Activated CD4-positive, alpha-beta T cell treated with anti-CD3 and anti-CD28 coated beads for 36 hours (primary cell): ENCODE measurements at regions of chr11 and their contacts with region 1.

Region 1: DNA sequence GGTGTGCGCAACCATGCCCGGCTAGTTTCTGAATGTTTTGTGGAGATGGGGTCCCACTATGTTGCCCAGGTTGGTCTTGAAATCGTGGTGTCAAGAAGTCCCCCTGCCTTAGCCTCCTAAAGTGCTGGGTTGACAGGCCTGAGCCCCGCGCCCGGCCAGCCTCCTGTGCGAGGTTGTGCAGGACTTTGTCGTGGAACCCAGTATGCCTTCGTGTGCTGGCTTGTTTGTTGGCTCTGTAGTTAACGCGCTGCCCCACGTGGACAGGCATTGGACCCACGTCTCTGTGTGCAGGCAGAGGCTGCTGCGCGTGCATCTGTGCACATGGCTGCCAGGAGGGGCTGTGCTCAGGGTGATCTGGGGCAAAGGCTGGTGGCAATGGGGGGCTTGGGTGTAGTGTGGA is 33.9 kb upstream of the ZNF195 start:
- DNase-seq: no peak
- ATAC-seq: no peak
- H3K4me3 Mint-ChIP-seq: no peak overlapping the region
- H3K27ac Mint-ChIP-seq: no peak overlapping the region
- H3K4me1 Mint-ChIP-seq: peaks cover 5% of the 10 kb centered on the region
- H3K27me3 Mint-ChIP-seq: no peaks in the 10 kb centered on the region

Region 2: DNA sequence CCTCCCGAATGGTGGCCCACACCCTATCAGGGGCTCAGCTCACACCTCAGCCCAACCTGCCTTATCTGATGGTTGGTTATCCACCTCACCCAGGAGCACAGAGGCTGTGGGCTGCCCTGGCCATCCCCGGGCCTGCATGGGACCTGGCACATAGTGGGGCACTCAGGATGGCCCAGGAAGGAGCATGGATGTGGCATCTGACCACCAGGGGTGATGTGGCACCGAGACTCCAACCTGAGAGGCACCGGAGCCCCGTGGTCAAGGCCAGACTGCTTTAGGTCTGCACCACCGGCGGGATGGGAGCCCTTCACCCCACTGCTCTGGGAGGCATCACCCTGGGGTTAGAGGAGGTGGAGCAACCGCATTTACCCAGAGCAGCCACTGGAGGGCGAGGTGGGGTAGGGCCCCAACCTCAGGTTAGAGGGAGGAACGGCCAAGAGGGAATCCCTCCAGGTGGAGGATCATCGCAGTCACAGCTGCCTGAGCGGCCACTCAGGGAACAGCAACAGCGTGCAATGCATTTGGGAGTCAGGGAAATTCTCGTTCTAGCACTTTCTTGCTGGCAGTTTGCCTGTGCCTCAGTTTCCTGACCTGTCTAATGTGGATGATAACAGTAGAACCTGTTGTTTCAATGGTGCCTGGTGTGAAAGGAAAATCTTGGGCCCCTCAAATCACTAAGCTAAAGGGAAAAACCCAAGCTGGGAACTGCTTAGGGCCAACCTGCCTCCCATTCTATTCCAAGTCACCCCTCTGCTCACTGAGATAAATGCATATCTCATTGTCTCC is 302.7 kb before region 1 on chr11:
- CTCF ChIA-PET with region 1: interaction called, 7 read pairs
- POLR2A ChIA-PET with region 1: no interaction called
- intact Hi-C with region 1: loop called in 1 of 2 experiments (anchors 2 kb)
- DNase-seq: peak; percentile 74
- ATAC-seq: peak; percentile 92
- H3K4me3 Mint-ChIP-seq: no peak overlapping the region
- H3K27ac Mint-ChIP-seq: no peak overlapping the region
- H3K4me1 Mint-ChIP-seq: no peaks in the 10 kb centered on the region
- H3K27me3 Mint-ChIP-seq: no peaks in the 10 kb centered on the region

Region 3: DNA sequence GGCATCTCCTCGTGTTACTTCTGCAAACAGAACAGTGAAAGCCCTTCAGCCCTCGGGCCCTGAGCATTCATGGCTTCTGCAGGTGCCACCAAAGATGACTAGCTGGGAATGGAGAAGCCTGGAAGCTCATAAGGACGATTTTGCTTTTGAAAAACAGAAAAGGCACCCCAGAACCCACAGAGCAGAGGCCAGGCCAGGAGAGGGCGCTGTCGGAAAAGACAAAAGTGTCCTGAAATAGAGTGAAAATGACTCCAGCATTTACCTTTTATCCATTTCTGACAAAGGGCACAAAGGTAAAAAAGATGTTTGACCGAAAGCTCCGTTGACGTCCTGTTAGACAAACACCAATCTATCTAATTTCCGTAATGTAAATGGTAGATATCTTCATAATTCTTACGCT is 71.5 kb before region 1 on chr11:
- CTCF ChIA-PET with region 1: interaction called, 34 read pairs
- POLR2A ChIA-PET with region 1: interaction called, 3 read pairs
- intact Hi-C with region 1: loop called (anchors 1 to 5 kb)
- DNase-seq: peak; percentile 87
- ATAC-seq: peak; percentile 36
- H3K4me3 Mint-ChIP-seq: no peak overlapping the region
- H3K27ac Mint-ChIP-seq: no peak overlapping the region
- H3K4me1 Mint-ChIP-seq: peaks cover 5% of the 10 kb centered on the region
- H3K27me3 Mint-ChIP-seq: peaks cover 26% of the 10 kb centered on the region

Region 4: GRCh38 chr11:3378426-3379423 is 34.1 kb before region 1 on chr11 and contains the start of gene ZNF195:
- CTCF ChIA-PET with region 1: interaction called, 19 read pairs
- POLR2A ChIA-PET with region 1: no interaction called
- intact Hi-C with region 1: no loop called
- DNase-seq: peak; percentile 99
- ATAC-seq: peak; percentile 100
- H3K4me3 Mint-ChIP-seq: peak within 1 kb of the TSS; percentile 91
- H3K27ac Mint-ChIP-seq: peak within 1 kb of the TSS; percentile 93
- H3K4me1 Mint-ChIP-seq: peaks cover 47% of the 10 kb centered on the region
- H3K27me3 Mint-ChIP-seq: no peaks in the 10 kb centered on the region
- total RNA-seq, gene ZNF195: 32.6 to 36.2 TPM

Region 5: DNA sequence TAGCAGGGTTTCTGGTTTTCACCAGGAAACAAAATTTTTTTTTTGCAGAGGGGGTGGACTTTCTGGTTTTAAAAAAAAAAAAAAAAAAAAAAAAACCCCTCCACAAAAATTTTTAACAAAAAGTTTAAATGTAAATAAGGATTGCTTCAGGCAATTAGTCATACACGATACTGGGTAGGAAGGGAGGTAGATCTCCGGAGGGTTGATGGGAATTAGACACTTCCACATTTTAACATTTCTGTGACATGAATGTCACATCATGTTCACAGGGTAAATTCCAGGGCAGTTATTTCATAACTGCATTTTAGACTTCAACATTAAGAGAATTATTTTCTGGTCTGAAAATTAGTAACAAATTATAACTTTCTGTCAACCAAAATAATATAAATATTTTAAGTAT is 368.6 kb after region 1 on chr11:
- CTCF ChIA-PET with region 1: no interaction called
- POLR2A ChIA-PET with region 1: no interaction called
- intact Hi-C with region 1: no loop called
- DNase-seq: no peak
- ATAC-seq: no peak
- H3K4me3 Mint-ChIP-seq: no peak overlapping the region
- H3K27ac Mint-ChIP-seq: peak overlapping the region; percentile 72
- H3K4me1 Mint-ChIP-seq: peaks cover 47% of the 10 kb centered on the region
- H3K27me3 Mint-ChIP-seq: no peaks in the 10 kb centered on the region